ENCODE measurements at regions of chr16 and their contacts with region 1.

Region 1: DNA sequence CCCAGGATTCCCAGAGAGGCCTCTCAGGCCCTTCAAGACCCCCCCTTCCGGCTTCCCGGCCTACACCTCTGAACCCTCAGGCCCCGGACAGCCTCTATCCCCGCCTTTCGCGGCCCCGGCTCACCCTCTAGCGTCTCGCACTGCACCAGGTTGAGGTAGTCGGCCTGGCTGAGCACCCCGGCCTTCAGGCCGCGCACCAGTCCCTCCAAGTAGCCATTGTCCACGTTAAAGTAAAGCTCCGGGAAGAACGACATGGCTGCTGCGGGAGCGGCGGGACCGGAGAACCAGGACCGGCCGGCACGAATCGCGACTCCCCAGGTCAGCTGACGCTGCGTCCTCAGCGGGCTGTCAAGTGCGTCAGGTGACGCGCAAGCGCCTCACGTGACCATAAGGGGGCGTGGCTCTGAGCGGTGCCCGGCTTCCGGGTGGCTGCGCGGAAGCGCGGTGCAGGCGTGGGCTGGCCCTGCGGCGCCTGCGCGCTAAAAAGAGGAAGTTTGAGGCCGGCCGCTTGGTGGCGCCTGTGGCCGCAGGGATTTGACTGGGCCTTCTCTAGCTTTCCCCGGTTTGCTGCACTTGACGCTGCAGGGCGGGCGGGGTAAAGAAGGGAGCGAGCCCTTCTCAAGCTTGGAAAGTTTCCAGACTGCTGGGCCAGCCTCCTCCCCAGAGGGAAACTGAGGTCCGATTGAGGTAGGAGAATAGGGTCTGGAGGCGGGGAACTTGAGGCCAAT is at the start of gene ATP6V0D1:
- DNase-seq: peak; percentile 98 to 99 (median 99)
- ATAC-seq: peak; percentile 90
- H3K4me3 ChIP-seq: peak within 1 kb of the TSS; percentile 91 to 100
- H3K4me3 Mint-ChIP-seq: peak within 1 kb of the TSS; percentile 99
- H3K27ac ChIP-seq: peak within 1 kb of the TSS; percentile 96 to 100
- H3K27ac Mint-ChIP-seq: peak within 1 kb of the TSS; percentile 99
- H3K4me1 ChIP-seq: peaks cover 30% of the 10 kb centered on the region
- H3K4me1 Mint-ChIP-seq: peaks cover 49% of the 10 kb centered on the region
- H3K27me3 ChIP-seq: no peaks in the 10 kb centered on the region
- H3K27me3 Mint-ChIP-seq: no peaks in the 10 kb centered on the region
- CTCF ChIP-seq: peak; percentile 87
- total RNA-seq, gene ATP6V0D1: 56.3 to 62.0 TPM

Region 2: GRCh38 chr16:67226804-67227557 is 254.0 kb before region 1 on chr16 and contains the start of gene TMEM208:
- CTCF ChIA-PET with region 1: no interaction called
- POLR2A ChIA-PET with region 1: no interaction called
- intact Hi-C with region 1: loop called in 1 of 2 experiments (anchors 1 kb)
- DNase-seq: peak; percentile 95 to 99 (median 98)
- ATAC-seq: peak; percentile 98
- H3K4me3 ChIP-seq: peak within 1 kb of the TSS; percentile 95 to 100
- H3K4me3 Mint-ChIP-seq: peak within 1 kb of the TSS; percentile 100
- H3K27ac ChIP-seq: peak within 1 kb of the TSS; percentile 83 to 93
- H3K27ac Mint-ChIP-seq: peak within 1 kb of the TSS; percentile 98
- H3K4me1 ChIP-seq: peaks cover 26% of the 10 kb centered on the region
- H3K4me1 Mint-ChIP-seq: peaks cover 47% of the 10 kb centered on the region
- H3K27me3 ChIP-seq: no peaks in the 10 kb centered on the region
- H3K27me3 Mint-ChIP-seq: no peaks in the 10 kb centered on the region
- CTCF ChIP-seq: no peak
- total RNA-seq, gene TMEM208: 37.1 to 44.7 TPM

Region 3: GRCh38 chr16:67499106-67499505 is 18.1 kb after region 1 on chr16:
- CTCF ChIA-PET with region 1: interaction called, 89 read pairs
- POLR2A ChIA-PET with region 1: interaction called, 4 read pairs
- intact Hi-C with region 1: loop called in 1 of 2 experiments (anchors 1 kb)
- DNase-seq: no peak
- ATAC-seq: no peak
- H3K4me3 ChIP-seq: no peak overlapping the region
- H3K4me3 Mint-ChIP-seq: no peak overlapping the region
- H3K27ac ChIP-seq: peak overlapping the region in 1 of 2 experiments; percentile 8
- H3K27ac Mint-ChIP-seq: no peak overlapping the region
- H3K4me1 ChIP-seq: peaks cover 10% of the 10 kb centered on the region
- H3K4me1 Mint-ChIP-seq: peaks cover 13% of the 10 kb centered on the region
- H3K27me3 ChIP-seq: no peaks in the 10 kb centered on the region
- H3K27me3 Mint-ChIP-seq: no peaks in the 10 kb centered on the region
- CTCF ChIP-seq: no peak

Region 4: GRCh38 chr16:67641779-67642708 is 161.0 kb after region 1 on chr16:
- CTCF ChIA-PET with region 1: interaction called, 16 read pairs
- POLR2A ChIA-PET with region 1: no interaction called
- intact Hi-C with region 1: no loop called
- DNase-seq: no peak
- ATAC-seq: no peak
- H3K4me3 ChIP-seq: no peak overlapping the region
- H3K4me3 Mint-ChIP-seq: no peak overlapping the region
- H3K27ac ChIP-seq: no peak overlapping the region
- H3K27ac Mint-ChIP-seq: no peak overlapping the region
- H3K4me1 ChIP-seq: peaks cover 26% of the 10 kb centered on the region
- H3K4me1 Mint-ChIP-seq: peaks cover 9% of the 10 kb centered on the region
- H3K27me3 ChIP-seq: no peaks in the 10 kb centered on the region
- H3K27me3 Mint-ChIP-seq: no peaks in the 10 kb centered on the region
- CTCF ChIP-seq: no peak

Region 5: DNA sequence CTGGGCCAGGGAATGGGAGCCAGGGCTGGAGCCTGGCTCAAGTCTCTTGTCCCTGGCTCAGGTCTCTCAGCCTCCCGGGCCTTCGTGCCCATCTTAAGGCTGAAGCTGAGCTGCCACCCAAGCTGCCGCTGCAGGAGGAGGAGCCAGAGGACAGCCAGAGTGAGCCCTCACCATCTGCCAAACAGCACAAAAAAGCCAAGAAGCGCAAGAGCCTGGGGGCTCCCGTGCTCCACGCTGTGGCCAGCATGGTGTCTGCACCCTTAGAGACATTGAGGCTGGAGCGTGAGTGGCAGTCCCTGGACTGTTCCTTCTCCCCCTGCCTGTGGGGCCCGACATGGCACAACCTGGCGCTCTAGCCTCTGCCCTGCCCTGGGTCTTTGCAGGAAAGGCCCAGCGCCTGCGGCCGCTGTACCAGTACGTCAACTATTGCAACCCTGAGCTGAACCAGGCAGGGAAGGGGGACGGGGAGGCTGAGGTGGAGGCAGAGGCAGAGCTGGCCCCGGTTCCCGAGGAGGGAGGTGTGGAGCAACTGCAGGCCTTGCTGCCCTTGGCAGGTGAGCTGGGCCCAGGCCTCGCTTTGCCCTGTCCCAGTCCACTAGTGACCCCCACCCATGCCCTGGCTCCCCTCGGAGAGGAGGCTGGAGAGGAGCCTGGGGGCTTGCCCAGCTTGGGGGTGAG is 187.0 kb after region 1 on chr16:
- CTCF ChIA-PET with region 1: no interaction called
- POLR2A ChIA-PET with region 1: no interaction called
- intact Hi-C with region 1: loop called in 1 of 2 experiments (anchors 1 kb)
- DNase-seq: peak; percentile 64 to 91 (median 78)
- ATAC-seq: peak; percentile 90
- H3K4me3 ChIP-seq: peak overlapping the region in 1 of 2 experiments; percentile 84
- H3K4me3 Mint-ChIP-seq: peak overlapping the region; percentile 82
- H3K27ac ChIP-seq: peak overlapping the region in 1 of 2 experiments; percentile 38
- H3K27ac Mint-ChIP-seq: no peak overlapping the region
- H3K4me1 ChIP-seq: peaks cover 17% of the 10 kb centered on the region
- H3K4me1 Mint-ChIP-seq: peaks cover 16% of the 10 kb centered on the region
- H3K27me3 ChIP-seq: no peaks in the 10 kb centered on the region
- H3K27me3 Mint-ChIP-seq: no peaks in the 10 kb centered on the region
- CTCF ChIP-seq: peak; percentile 65

Measured in CD8-positive, alpha-beta T cell (primary cell).